ENCODE measurements at regions of chr16 and their contacts with region 1.

Region 1: DNA sequence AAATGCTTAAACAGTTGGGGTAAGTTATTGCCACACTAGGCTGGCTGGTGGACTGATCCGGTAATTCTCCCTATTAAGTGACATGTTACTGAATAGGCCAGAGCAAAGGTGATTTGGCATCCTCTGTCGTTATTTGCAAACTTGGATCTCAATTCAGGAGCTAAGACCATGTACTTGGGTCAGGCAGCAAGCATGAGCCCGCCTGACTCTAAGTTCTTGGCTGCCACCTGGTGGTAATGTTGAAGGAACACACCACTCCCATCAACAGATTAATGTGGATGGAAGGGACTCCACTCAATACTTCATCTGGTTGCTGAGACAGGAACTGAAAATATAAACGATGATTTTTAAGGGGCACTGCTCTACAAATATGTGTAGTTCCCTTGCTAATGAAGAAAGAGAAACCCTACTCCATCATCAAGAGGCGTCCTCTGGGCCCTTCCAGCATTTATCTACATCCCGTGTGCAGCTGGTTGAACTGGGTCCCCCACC is 70.8 kb downstream of the EMP2 start:
- DNase-seq: peak; percentile 90
- H3K4me3 Mint-ChIP-seq: no peak overlapping the region
- H3K27ac Mint-ChIP-seq: no peak overlapping the region
- H3K4me1 Mint-ChIP-seq: peaks cover 15% of the 10 kb centered on the region
- H3K27me3 Mint-ChIP-seq: peaks cover 8% of the 10 kb centered on the region

Region 2: DNA sequence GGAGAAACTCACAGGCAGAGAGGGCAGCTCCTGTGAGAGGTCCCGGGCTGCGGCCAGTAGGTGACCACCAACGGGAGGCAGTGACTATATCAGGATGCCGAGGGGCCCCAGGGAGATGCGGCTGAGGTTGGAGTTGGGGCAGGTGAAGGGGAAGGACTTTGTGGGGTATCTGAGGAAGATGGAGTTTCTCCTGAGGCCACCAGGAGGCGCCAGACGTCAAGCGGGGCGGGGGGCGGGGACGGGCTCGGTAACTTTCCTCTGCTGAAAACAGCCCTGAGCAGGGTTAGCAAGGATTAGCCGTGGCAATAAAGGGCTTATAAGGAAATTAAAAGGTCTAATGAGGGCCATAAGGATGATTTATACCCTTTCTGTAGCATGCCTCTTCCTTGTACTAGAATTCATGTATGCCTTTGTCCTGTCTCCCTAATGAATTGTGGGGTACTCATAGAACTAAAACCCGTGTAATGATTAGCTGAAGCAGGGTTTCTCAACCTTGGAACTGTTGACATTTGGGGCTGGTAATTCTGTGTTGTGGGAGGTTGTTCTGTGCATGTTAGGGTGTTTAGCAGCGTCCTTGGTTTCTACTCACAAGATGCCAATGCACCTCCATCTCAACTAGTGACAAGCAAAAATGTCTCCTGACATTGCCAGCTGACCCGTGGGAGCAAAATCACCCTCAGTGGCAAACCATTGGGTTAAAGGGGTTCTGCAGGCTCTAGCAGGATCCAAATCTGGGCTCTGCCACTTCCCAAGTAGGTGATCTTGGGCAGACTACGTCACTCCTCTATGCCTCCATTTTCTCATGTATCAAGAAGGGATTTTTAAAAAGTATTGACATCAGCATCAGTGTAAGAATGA is 252.6 kb before region 1 on chr16:
- intact Hi-C with region 1: loop called (anchors 1 kb)
- DNase-seq: peak; percentile 77
- H3K4me3 Mint-ChIP-seq: no peak overlapping the region
- H3K27ac Mint-ChIP-seq: no peak overlapping the region
- H3K4me1 Mint-ChIP-seq: peaks cover 4% of the 10 kb centered on the region
- H3K27me3 Mint-ChIP-seq: peaks cover 1% of the 10 kb centered on the region

Region 3: DNA sequence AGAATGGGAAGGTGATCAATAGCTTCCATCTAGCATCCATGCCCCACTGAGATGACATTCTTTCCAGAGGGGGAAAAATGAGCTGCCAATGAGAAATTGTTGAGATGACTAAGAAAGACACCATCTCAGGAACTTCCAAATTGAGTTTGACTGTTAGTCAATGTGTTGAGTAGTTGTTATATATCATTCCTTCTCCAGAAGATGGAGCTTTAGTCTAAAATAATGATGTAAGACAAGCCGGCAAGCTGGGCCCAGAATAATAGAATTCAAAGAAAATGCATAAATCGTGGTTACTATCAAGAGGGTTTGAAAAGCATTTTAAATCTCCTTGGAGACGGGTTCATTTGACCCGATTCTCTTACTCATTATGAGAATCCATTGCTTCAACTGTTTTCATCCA is 194.8 kb before region 1 on chr16:
- intact Hi-C with region 1: loop called (anchors 1 kb)
- DNase-seq: peak; percentile 61
- H3K4me3 Mint-ChIP-seq: no peak overlapping the region
- H3K27ac Mint-ChIP-seq: no peak overlapping the region
- H3K4me1 Mint-ChIP-seq: peaks cover 15% of the 10 kb centered on the region
- H3K27me3 Mint-ChIP-seq: no peaks in the 10 kb centered on the region

Region 4: DNA sequence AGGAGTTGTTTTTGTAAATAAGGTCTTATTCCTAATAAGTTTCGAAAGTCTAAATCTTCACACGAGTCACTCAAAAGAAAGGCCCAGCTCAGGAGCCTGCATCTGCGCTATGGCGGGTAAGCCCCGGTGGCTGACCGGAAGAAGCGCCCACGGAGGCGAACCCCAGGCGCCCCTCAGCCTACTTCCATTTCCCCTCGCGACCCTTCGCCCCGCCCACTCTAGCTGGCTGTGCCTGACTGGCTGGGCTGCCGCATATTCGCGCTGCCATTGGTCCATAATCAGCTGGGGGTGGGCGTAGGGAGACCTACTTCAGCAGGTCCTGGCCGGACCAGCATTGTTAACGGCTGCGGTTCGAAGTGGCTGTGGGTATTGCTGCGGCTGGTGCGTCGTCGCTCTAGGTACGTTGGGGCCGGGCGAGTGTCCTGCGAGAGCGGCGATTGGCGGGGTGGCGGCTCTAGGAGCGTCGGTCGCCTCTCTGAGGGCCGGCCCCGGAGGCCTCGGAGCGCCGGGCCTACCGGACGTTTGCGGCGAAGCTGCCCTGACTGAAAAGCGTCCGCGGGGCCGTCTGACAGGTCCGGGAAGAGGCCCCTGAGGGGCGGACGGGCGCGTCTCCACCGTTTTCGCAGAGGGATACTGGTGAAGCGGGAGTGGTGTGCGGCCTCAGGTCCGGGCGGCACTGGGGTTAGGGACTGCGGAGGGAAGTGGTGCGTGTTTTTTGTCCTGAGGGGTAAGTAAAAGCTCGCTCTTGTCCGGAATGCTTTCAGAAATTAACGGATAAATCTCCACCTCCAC is 123.7 kb before region 1 on chr16 and contains the start of gene ATF7IP2:
- intact Hi-C with region 1: loop called (anchors 5 kb)
- DNase-seq: peak; percentile 96
- H3K4me3 Mint-ChIP-seq: peak within 1 kb of the TSS; percentile 96
- H3K27ac Mint-ChIP-seq: peak within 1 kb of the TSS; percentile 97
- H3K4me1 Mint-ChIP-seq: peaks cover 33% of the 10 kb centered on the region
- H3K27me3 Mint-ChIP-seq: no peaks in the 10 kb centered on the region
- total RNA-seq, gene ATF7IP2: 22.3 and 23.4 TPM in 2 replicates

Region 5: DNA sequence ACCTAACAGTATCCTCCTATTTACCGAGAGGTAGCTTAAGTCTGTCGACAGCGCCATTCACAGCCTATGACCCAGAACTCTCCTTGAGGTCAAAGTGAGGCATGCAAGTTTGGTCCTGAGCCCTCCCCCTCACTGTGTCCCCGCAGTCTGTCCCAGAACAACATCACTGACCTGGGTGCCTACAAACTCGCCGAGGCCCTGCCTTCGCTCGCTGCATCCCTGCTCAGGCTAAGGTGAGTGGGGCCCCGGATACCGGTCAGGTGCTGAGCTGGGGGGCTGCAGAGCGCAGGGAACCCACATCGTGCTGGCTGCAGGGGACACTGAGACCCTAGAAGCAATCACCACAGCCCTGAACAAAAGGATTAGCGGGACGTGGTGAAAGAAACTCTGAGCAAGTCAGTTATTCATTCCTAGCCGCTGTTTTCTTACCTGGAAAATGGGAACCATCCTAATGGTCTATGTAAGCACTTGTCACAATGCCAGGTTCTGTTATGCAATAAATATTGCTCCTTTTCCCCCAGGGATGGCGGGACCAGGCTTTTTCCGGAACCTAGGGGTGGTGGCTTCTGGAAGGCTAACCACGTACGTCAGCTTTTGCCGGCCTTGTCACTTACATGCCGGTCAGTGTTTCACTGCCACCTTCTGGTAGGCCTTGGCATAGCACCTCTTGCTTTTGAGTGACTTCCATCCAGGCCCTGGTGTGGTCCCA is 408.9 kb after region 1 on chr16:
- intact Hi-C with region 1: loop called (anchors 2 kb)
- DNase-seq: peak; percentile 94
- H3K4me3 Mint-ChIP-seq: no peak overlapping the region
- H3K27ac Mint-ChIP-seq: no peak overlapping the region
- H3K4me1 Mint-ChIP-seq: peaks cover 18% of the 10 kb centered on the region
- H3K27me3 Mint-ChIP-seq: peaks cover 4% of the 10 kb centered on the region

Measured in activated CD4-positive, alpha-beta T cell treated with anti-CD3 and anti-CD28 coated beads, Interleukin-2, amount 10 ng/mL, durations not matched to agents 24 days and 14 days (primary cell).